ENCODE measurements at regions of chr15 and their contacts with region 1.

Region 1: GRCh38 chr15:64841258-64842095 is at the start of gene PLEKHO2:
- DNase-seq: peak; percentile 82 to 98 (median 89)

Region 2: GRCh38 chr15:64856429-64857145 is 15.1 kb after region 1 on chr15:
- intact Hi-C with region 1: loop called (anchors 2 kb)
- DNase-seq: peak; percentile 81 to 99 (median 90)

Region 3: GRCh38 chr15:64895285-64896065 is 54.0 kb after region 1 on chr15:
- intact Hi-C with region 1: loop called (anchors 5 kb)
- DNase-seq: peak in 2 of 10 donors; percentile 14 to 20

Region 4: DNA sequence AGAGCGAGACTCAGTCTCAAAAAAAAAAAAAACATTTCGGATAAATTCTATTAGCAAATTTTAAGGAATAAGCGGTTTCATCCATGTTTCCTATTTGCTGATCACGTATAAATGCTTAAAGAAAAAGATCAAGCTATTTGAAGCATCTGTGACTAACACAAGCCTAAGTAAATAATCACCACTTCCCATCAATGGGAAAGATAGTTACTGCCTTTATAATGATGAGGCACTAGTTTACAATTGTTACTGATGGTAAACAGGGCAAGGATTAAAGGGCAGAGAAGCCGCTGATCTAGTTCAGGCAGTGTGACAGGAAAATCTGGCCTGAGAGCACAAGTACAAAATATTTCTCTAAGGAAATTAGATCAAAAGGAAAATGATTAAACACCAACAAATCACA is 330.0 kb after region 1 on chr15:
- intact Hi-C with region 1: no loop called
- DNase-seq: no peak